MCF 10A (cell line): ENCODE measurements at regions of chr1 and their contacts with region 1.

Region 1: GRCh38 chr1:222171005-222171404 is 376.9 kb downstream of the HHIPL2 start:
- DNase-seq: peak; percentile 67
- H3K4me3 Mint-ChIP-seq: no peak overlapping the region
- H3K27ac Mint-ChIP-seq: no peak overlapping the region
- H3K4me1 Mint-ChIP-seq: peaks cover 16% of the 10 kb centered on the region
- H3K27me3 Mint-ChIP-seq: no peaks in the 10 kb centered on the region
- CTCF ChIP-seq: peak; percentile 86

Region 2: GRCh38 chr1:220879076-220879508 is 1291.9 kb before region 1 on chr1 and contains the start of gene HLX:
- CTCF ChIA-PET with region 1: no interaction called
- POLR2A ChIA-PET with region 1: no interaction called
- intact Hi-C with region 1: loop called (anchors 10 kb)
- DNase-seq: peak; percentile 81
- H3K4me3 Mint-ChIP-seq: peak within 1 kb of the TSS; percentile 75
- H3K27ac Mint-ChIP-seq: peak within 1 kb of the TSS; percentile 62
- H3K4me1 Mint-ChIP-seq: peaks cover 21% of the 10 kb centered on the region
- H3K27me3 Mint-ChIP-seq: no peaks in the 10 kb centered on the region
- CTCF ChIP-seq: no peak
- total RNA-seq, gene HLX: 2.1 and 2.3 TPM in 2 replicates

Region 3: DNA sequence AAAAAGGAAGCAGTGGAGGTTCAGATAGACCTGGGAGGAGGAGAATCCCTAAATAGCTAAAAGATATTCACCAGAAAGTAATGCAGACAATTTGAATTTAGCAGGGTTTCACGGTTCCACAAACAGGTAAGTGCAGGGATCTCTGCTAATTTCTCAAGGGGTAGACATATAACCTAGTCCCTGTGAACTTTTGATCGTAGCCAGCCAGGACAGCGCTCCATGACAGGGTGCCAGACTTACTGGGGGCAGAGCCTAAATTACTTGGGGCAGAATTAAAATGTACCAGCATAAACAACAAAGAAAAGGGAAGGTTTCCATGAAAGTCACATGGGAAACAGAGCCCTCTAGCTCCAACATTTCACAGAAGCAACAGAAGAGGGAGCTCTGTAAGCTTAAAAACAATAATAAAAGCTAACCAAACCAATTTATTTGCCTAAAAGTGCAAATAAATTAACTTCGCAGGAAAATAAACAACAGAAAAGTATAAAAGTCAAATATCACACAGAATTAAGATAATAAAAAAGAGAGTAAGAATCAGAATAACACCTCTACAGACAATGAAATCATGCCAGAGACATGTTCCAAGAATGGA is 627.4 kb before region 1 on chr1:
- CTCF ChIA-PET with region 1: interaction called, 11 read pairs
- POLR2A ChIA-PET with region 1: no interaction called
- intact Hi-C with region 1: loop called (anchors 1 kb)
- DNase-seq: peak; percentile 56
- H3K4me3 Mint-ChIP-seq: no peak overlapping the region
- H3K27ac Mint-ChIP-seq: peak overlapping the region; percentile 44
- H3K4me1 Mint-ChIP-seq: peaks cover 15% of the 10 kb centered on the region
- H3K27me3 Mint-ChIP-seq: no peaks in the 10 kb centered on the region
- CTCF ChIP-seq: peak; percentile 86

Region 4: DNA sequence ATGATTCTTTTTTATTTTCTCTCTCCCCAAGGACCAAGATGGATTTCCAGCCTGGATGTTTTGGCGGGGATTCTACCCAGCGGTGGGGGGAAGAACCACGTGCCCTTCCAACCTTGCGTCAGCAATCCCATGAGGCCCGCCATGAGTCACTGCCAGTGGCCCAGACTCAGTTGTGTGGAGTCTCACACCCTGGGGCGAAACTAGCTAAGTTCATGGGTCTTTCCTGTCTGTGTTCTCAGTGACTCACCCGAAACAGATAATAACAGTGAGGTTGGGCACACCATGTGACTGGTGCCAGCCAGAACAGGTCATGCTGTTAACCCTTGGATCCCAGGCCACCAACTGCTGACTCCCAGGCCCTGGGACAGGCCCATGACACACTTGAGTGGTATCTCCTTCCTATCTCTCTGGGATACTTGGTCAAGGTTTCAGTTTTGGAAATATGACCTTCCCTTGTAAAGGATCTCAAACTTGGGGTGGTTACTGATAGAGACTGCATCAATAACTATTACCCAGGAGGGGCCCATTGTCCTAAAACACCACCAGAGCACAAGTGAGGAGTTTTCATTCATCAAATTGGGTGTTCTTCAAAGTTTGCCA is 331.1 kb before region 1 on chr1:
- CTCF ChIA-PET with region 1: interaction called, 3 read pairs
- POLR2A ChIA-PET with region 1: no interaction called
- intact Hi-C with region 1: loop called (anchors 1 kb)
- DNase-seq: peak; percentile 100
- H3K4me3 Mint-ChIP-seq: no peak overlapping the region
- H3K27ac Mint-ChIP-seq: peak overlapping the region; percentile 94
- H3K4me1 Mint-ChIP-seq: peaks cover 63% of the 10 kb centered on the region
- H3K27me3 Mint-ChIP-seq: no peaks in the 10 kb centered on the region
- CTCF ChIP-seq: no peak

Region 5: GRCh38 chr1:222064388-222065211 is 106.4 kb before region 1 on chr1:
- CTCF ChIA-PET with region 1: no interaction called
- POLR2A ChIA-PET with region 1: no interaction called
- intact Hi-C with region 1: no loop called
- DNase-seq: peak; percentile 47
- H3K4me3 Mint-ChIP-seq: no peak overlapping the region
- H3K27ac Mint-ChIP-seq: no peak overlapping the region
- H3K4me1 Mint-ChIP-seq: no peaks in the 10 kb centered on the region
- H3K27me3 Mint-ChIP-seq: no peaks in the 10 kb centered on the region
- CTCF ChIP-seq: no peak

Region 6: DNA sequence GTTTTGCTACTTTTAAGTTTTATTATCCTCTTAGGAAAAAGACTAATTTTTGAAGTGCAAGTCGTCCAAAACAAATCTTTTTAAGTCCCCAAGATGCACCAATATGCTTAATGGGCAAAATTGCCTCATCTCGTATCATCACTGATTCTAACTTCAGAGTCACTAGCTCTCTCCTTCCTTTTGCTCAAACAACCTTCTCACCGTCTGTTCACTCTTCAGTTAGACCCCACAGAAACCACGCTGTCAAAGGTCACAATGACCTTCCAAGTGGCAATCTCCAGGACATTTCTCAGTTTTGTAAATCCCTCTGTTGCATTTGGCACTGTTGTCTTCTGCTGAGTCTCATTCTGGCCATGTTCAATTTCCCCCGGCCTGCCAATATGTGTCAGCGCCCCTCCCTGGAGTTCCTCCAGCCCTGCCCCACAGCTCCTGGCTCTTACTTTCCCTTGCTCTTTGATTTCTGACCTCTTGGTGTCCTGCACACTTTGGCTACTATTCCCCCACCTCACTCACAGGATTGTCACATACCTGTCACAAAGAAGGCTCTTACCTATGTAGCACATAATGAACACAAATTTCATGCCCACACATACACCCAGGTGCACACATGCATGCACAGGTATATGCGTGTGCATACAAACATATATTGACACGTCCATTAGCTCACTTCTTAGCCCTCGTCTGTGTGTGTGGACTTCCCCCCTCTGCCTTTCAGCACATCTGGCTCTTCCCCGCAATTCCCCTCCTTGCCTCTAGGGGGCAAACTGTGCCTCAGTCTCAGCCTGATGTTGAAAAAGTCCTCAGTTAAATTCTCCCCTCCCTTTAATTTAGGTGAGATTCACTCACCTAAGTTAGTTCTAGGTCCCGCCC is 75.2 kb before region 1 on chr1:
- CTCF ChIA-PET with region 1: interaction called, 17 read pairs
- POLR2A ChIA-PET with region 1: interaction called, 4 read pairs
- intact Hi-C with region 1: loop called (anchors 1 kb)
- DNase-seq: peak; percentile 72
- H3K4me3 Mint-ChIP-seq: no peak overlapping the region
- H3K27ac Mint-ChIP-seq: no peak overlapping the region
- H3K4me1 Mint-ChIP-seq: no peaks in the 10 kb centered on the region
- H3K27me3 Mint-ChIP-seq: no peaks in the 10 kb centered on the region
- CTCF ChIP-seq: peak; percentile 97

Region 7: GRCh38 chr1:222392556-222392955 is 221.6 kb after region 1 on chr1:
- CTCF ChIA-PET with region 1: no interaction called
- POLR2A ChIA-PET with region 1: no interaction called
- intact Hi-C with region 1: no loop called
- DNase-seq: no peak
- H3K4me3 Mint-ChIP-seq: no peak overlapping the region
- H3K27ac Mint-ChIP-seq: no peak overlapping the region
- H3K4me1 Mint-ChIP-seq: peaks cover 5% of the 10 kb centered on the region
- H3K27me3 Mint-ChIP-seq: no peaks in the 10 kb centered on the region
- CTCF ChIP-seq: no peak